ENCODE measurements at regions of chr3 and their contacts with region 1.

Region 1: DNA sequence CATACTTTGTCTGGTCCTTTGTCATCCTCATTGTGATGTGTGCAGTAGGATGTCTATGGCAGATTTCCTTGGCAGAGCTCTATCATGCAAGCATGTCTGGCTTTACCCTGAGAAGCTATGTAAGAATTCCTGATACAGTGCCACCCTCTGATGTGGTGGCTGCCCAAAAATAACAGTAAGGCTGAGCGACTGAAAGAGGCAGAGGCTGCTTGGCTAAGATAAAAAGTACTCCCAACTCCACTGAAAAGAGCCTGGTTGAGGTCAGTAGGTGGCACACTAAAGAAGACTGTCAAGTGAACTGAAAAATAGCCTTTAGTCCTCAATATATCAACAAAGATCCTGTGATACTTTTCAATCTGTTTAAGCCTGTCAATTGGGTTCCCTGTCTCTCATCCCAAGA is 31.7 kb downstream of the BTLA start:
- DNase-seq: no peak
- H3K4me3 Mint-ChIP-seq: no peak overlapping the region
- H3K27ac Mint-ChIP-seq: peak overlapping the region; percentile 71
- H3K4me1 Mint-ChIP-seq: peaks cover 85% of the 10 kb centered on the region
- H3K27me3 Mint-ChIP-seq: no peaks in the 10 kb centered on the region

Region 2: DNA sequence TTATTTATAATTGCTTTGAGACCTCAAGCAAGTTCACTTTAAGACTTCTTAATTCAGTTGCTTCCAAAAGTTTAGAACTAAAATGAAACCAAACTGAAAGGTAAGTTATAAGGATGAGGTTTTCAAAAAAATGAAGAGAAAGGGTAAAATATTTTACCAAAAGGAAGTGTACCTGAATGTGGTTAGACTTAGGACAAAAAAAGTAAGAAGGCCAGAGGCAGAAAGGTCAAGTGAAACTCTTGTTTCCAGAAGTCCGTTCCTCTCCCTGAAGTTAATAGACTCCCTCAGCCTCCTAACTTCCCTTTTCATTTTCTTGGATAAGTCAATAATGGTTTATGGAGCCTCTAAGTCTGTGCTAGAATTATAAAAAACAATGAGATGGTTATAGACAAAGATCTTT is 15.1 kb after region 1 on chr3:
- CTCF ChIA-PET with region 1: interaction called, 7 read pairs
- intact Hi-C with region 1: loop called (anchors 1 kb)
- DNase-seq: no peak
- H3K4me3 Mint-ChIP-seq: no peak overlapping the region
- H3K27ac Mint-ChIP-seq: peak overlapping the region; percentile 47
- H3K4me1 Mint-ChIP-seq: peaks cover 71% of the 10 kb centered on the region
- H3K27me3 Mint-ChIP-seq: no peaks in the 10 kb centered on the region